GM12878 (cell line): ENCODE measurements at regions of chr22 and their contacts with region 1.

Region 1: DNA sequence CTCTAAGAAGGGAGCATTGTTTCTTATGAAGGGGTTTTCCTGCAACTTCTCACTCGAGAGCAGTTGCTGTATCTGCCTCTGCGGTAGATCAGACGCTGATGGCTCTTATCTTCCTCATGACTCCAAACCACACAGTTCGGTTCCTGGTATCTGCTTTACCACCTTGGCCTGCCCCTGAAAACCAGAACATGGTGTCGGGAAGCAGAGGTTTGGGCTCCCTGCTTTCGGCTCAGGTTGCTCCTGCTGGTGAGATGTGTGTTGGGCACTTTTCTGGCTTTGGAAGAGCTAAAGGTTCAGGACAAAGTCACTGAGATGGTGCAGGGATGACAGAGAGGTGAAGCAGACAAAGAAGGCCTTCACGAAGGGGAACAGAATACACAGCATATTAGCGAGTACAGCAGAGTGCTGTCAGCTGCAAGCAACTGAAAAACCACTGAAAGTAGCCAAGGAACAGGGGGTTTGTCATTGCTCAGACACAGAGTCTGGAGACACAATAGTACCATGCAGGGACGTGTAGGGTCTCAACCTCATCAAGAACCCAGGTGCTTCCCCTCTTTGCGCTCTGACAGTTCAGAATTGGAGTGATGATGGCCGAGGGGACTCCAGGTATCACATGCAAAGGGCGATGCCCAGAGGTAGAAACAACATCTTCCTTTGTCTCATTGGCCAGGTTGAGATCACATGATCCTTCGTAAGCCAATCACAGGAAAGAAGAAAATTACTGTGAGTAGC is 11.9 kb upstream of the CSF2RB start:
- DNase-seq: peak; percentile 90
- ATAC-seq: peak; percentile 85
- H3K4me3 ChIP-seq: peak overlapping the region; percentile 35; the same call in 1 of the 2 replicates
- H3K27ac ChIP-seq: peak overlapping the region; percentile 80
- H3K4me1 ChIP-seq: peaks cover 33% of the 10 kb centered on the region
- H3K27me3 ChIP-seq: no peaks in the 10 kb centered on the region
- CTCF ChIP-seq: 0 out of 6 replicates have a peak, but pooled peaks of 1 of the 3 experiments have one; percentile 3
- EP300 ChIP-seq: peak; percentile 60 to 84
- POLR2A ChIP-seq: 0 out of 2 replicates have a peak, but pooled peaks have one; percentile 22
- RAD21 ChIP-seq: no peak

Region 2: GRCh38 chr22:36816636-36817524 is 84.7 kb before region 1 on chr22 and contains the start of gene PVALB:
- CTCF ChIA-PET with region 1: no interaction called
- POLR2A ChIA-PET with region 1: no interaction called
- RAD21 ChIA-PET with region 1: no interaction called
- SMC1A ChIA-PET with region 1: no interaction called
- in situ Hi-C with region 1: no loop called
- intact Hi-C with region 1: no loop called
- DNase-seq: no peak
- ATAC-seq: no peak
- H3K4me3 ChIP-seq: no peak within 1 kb of the TSS
- H3K27ac ChIP-seq: no peak within 1 kb of the TSS
- H3K4me1 ChIP-seq: no peaks in the 10 kb centered on the region
- H3K27me3 ChIP-seq: peaks cover 20 to 23% of the 10 kb centered on the region in 2 experiments
- CTCF ChIP-seq: no peak
- EP300 ChIP-seq: no peak
- POLR2A ChIP-seq: no peak
- RAD21 ChIP-seq: no peak
- polyA plus RNA-seq, gene PVALB: not detected

Region 3: DNA sequence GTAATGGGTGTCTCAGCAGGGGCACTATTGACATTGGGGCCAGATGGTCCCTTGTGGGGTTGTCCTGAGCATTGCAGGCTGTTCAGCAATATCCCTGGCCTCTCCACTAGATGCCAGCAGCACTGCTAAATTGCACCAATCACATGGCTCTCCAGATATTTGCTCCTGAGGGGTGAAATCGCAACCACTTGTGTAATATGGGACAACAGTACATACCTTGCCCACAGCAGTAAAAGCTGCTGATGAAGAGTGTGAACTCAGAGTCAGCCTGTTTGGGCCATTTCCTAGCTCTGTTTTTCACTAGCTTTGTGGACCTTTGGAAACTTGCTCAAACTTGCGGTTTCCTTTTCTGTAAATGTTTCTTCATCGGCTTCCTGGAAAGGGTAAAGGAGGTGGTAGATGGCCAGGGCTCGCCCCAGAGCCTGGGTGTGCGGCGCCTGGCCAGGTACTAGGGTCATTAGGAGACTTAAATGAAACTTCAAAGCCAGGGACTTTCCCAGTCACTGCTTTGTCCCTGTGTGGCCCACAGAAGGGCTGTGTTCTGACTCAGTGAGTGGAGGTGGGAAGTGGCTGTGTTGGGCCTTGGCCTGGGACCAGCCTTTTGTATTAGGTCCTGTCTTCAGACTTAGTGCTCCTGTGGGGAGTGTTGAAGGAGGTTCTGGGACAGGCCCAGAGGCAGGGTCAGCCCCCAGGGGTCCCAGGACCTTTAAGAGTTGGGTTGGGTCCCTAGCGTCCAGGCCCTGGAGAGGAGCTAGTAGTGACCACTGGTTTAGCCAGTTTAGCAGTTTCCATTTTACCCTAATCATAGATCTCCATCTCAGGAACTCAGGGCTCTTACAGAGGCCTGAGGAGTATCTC is 27.7 kb before region 1 on chr22:
- CTCF ChIA-PET with region 1: interaction called, 10 read pairs
- POLR2A ChIA-PET with region 1: interaction called, 5 read pairs
- RAD21 ChIA-PET with region 1: interaction called, 8 read pairs
- SMC1A ChIA-PET with region 1: interaction called, 5 read pairs
- in situ Hi-C with region 1: no loop called
- intact Hi-C with region 1: loop called (anchors 1 kb)
- DNase-seq: peak; percentile 69
- ATAC-seq: peak; percentile 96
- H3K4me3 ChIP-seq: no peak overlapping the region
- H3K27ac ChIP-seq: peak overlapping the region; percentile 59
- H3K4me1 ChIP-seq: peaks cover 16% of the 10 kb centered on the region
- H3K27me3 ChIP-seq: no peaks in the 10 kb centered on the region
- CTCF ChIP-seq: peak; percentile 55 to 64 (median 62)
- EP300 ChIP-seq: 0 out of 4 replicates have a peak, but pooled peaks have one; percentile 4 to 16
- POLR2A ChIP-seq: no peak
- RAD21 ChIP-seq: peak; percentile 63

Region 4: GRCh38 chr22:36913427-36914389 is 12.1 kb after region 1 on chr22 and contains the start of gene CSF2RB:
- CTCF ChIA-PET with region 1: interaction called, 21 read pairs
- POLR2A ChIA-PET with region 1: interaction called, 25 read pairs
- RAD21 ChIA-PET with region 1: interaction called, 12 read pairs
- SMC1A ChIA-PET with region 1: interaction called, 26 read pairs
- in situ Hi-C with region 1: no loop called
- intact Hi-C with region 1: no loop called
- DNase-seq: no peak
- ATAC-seq: peak; percentile 78
- H3K4me3 ChIP-seq: peak within 1 kb of the TSS; percentile 67
- H3K27ac ChIP-seq: peak within 1 kb of the TSS; percentile 68
- H3K4me1 ChIP-seq: peaks cover 23% of the 10 kb centered on the region; the same call in 1 of the 2 replicates
- H3K27me3 ChIP-seq: no peaks in the 10 kb centered on the region
- CTCF ChIP-seq: no peak
- EP300 ChIP-seq: no peak
- POLR2A ChIP-seq: peak; percentile 6; the same call in 1 of the 2 replicates
- RAD21 ChIP-seq: no peak
- polyA plus RNA-seq, gene CSF2RB: 0.82 to 1.5 TPM

Region 5: GRCh38 chr22:36921309-36922104 is 19.9 kb after region 1 on chr22:
- CTCF ChIA-PET with region 1: interaction called, 4 read pairs
- POLR2A ChIA-PET with region 1: interaction called, 7 read pairs
- RAD21 ChIA-PET with region 1: interaction called, 8 read pairs
- SMC1A ChIA-PET with region 1: interaction called, 6 read pairs
- in situ Hi-C with region 1: no loop called
- intact Hi-C with region 1: loop called (anchors 2 kb)
- DNase-seq: peak; percentile 69
- ATAC-seq: peak; percentile 92
- H3K4me3 ChIP-seq: 0 out of 2 replicates have a peak overlapping the region, but pooled peaks have one; percentile 0
- H3K27ac ChIP-seq: peak overlapping the region; percentile 76
- H3K4me1 ChIP-seq: peaks cover 20% of the 10 kb centered on the region
- H3K27me3 ChIP-seq: no peaks in the 10 kb centered on the region
- CTCF ChIP-seq: no peak
- EP300 ChIP-seq: peak; percentile 14 to 73; a peak in 3 of 4 replicates
- POLR2A ChIP-seq: no peak
- RAD21 ChIP-seq: 0 out of 2 replicates have a peak, but pooled peaks have one; percentile 4

Region 6: GRCh38 chr22:36991206-36991605 is 89.6 kb after region 1 on chr22:
- CTCF ChIA-PET with region 1: no interaction called
- POLR2A ChIA-PET with region 1: no interaction called
- RAD21 ChIA-PET with region 1: no interaction called
- SMC1A ChIA-PET with region 1: no interaction called
- in situ Hi-C with region 1: no loop called
- intact Hi-C with region 1: no loop called
- DNase-seq: no peak
- ATAC-seq: no peak
- H3K4me3 ChIP-seq: no peak overlapping the region
- H3K27ac ChIP-seq: no peak overlapping the region
- H3K4me1 ChIP-seq: no peaks in the 10 kb centered on the region
- H3K27me3 ChIP-seq: no peaks in the 10 kb centered on the region; a peak in 2 of 4 replicates
- CTCF ChIP-seq: no peak
- EP300 ChIP-seq: no peak
- POLR2A ChIP-seq: no peak
- RAD21 ChIP-seq: no peak

Region 7: GRCh38 chr22:37018798-37019308 is 117.3 kb after region 1 on chr22:
- CTCF ChIA-PET with region 1: no interaction called
- POLR2A ChIA-PET with region 1: no interaction called
- RAD21 ChIA-PET with region 1: no interaction called
- SMC1A ChIA-PET with region 1: no interaction called
- in situ Hi-C with region 1: no loop called
- intact Hi-C with region 1: no loop called
- DNase-seq: no peak
- ATAC-seq: peak; percentile 41
- H3K4me3 ChIP-seq: peak overlapping the region; percentile 78
- H3K27ac ChIP-seq: peak overlapping the region; percentile 58
- H3K4me1 ChIP-seq: peaks cover 8% of the 10 kb centered on the region
- H3K27me3 ChIP-seq: no peaks in the 10 kb centered on the region
- CTCF ChIP-seq: no peak
- EP300 ChIP-seq: no peak
- POLR2A ChIP-seq: no peak
- RAD21 ChIP-seq: no peak